ENCODE measurements at regions of chr9 and their contacts with region 1.

Region 1: DNA sequence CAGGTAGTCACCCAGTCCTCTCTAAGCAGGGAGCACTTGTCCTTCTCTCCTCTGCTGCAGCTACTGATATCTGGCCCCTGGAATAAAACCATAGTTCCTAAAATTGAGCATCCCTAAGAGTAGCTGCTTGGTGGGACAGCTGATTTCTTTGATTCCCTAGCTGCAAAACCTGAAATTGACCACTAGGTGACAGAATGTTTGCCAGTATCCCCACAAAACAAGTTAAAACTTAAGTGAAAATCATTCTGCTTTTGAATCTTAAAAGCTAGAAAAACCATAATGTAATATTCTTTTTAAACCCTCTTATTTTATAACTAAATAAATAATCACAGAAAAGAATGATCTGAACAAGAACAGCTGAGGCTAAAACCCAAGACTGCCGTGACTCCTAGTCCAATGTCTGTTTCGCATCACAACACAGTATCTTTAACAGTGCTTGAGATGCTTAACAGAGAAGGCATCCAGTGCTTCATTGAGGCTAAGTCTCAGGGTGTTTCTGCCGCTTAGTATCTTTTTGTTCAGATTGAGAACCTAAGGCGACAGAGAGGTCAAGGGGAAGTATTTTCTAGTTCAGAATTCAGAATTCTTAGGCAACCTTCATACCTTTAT is 24.4 kb upstream of the TAL2 start:
- DNase-seq: peak; percentile 12
- ATAC-seq: no peak
- H3K4me3 ChIP-seq: no peak overlapping the region
- H3K4me3 Mint-ChIP-seq: no peak overlapping the region
- H3K27ac ChIP-seq: no peak overlapping the region
- H3K27ac Mint-ChIP-seq: no peak overlapping the region
- H3K4me1 ChIP-seq: no peaks in the 10 kb centered on the region
- H3K4me1 Mint-ChIP-seq: no peaks in the 10 kb centered on the region
- H3K27me3 ChIP-seq: no peaks in the 10 kb centered on the region
- H3K27me3 Mint-ChIP-seq: no peaks in the 10 kb centered on the region
- CTCF ChIP-seq: peak; percentile 68

Region 2: DNA sequence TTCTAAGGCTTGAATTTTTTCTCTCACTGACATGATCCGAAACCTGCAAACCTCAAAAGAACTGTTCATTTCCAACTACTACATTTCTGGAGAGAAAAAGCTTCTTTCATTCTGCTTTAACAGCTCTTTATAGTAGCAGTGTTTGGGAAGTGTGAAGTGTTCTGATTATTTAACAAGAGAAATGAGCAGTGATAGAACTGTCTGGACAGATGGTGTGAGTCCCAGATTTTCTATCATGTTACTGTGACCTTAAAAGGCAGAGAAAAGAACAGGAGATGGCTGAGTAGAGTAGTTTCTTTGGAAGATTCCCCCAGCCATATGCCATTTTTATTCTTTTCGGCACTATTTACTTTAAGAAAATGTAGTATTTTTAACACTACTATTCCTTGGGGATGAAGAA is 16.9 kb before region 1 on chr9:
- CTCF ChIA-PET with region 1: interaction called, 10 read pairs
- POLR2A ChIA-PET with region 1: no interaction called
- intact Hi-C with region 1: no loop called
- DNase-seq: no peak
- ATAC-seq: no peak
- H3K4me3 ChIP-seq: no peak overlapping the region
- H3K4me3 Mint-ChIP-seq: no peak overlapping the region
- H3K27ac ChIP-seq: no peak overlapping the region
- H3K27ac Mint-ChIP-seq: no peak overlapping the region
- H3K4me1 ChIP-seq: no peaks in the 10 kb centered on the region
- H3K4me1 Mint-ChIP-seq: no peaks in the 10 kb centered on the region
- H3K27me3 ChIP-seq: no peaks in the 10 kb centered on the region
- H3K27me3 Mint-ChIP-seq: no peaks in the 10 kb centered on the region
- CTCF ChIP-seq: no peak

Region 3: GRCh38 chr9:105656131-105656921 is 18.4 kb after region 1 on chr9:
- CTCF ChIA-PET with region 1: interaction called, 10 read pairs
- POLR2A ChIA-PET with region 1: no interaction called
- intact Hi-C with region 1: no loop called
- DNase-seq: peak; percentile 52
- ATAC-seq: peak; percentile 80
- H3K4me3 ChIP-seq: peak overlapping the region; percentile 53 to 69 (median 63)
- H3K4me3 Mint-ChIP-seq: peak overlapping the region; percentile 91
- H3K27ac ChIP-seq: no peak overlapping the region
- H3K27ac Mint-ChIP-seq: peak overlapping the region; percentile 57
- H3K4me1 ChIP-seq: peaks cover 20 to 24% of the 10 kb centered on the region in 2 donors
- H3K4me1 Mint-ChIP-seq: peaks cover 24% of the 10 kb centered on the region
- H3K27me3 ChIP-seq: peaks cover 0 to 32% (median 20%) of the 10 kb centered on the region in 4 experiments
- H3K27me3 Mint-ChIP-seq: peaks cover 24% of the 10 kb centered on the region
- CTCF ChIP-seq: peak; percentile 35

Measured in B cell (primary cell).